WTC11 (cell line): ENCODE measurements at regions of chr15 and their contacts with region 1.

Region 1: DNA sequence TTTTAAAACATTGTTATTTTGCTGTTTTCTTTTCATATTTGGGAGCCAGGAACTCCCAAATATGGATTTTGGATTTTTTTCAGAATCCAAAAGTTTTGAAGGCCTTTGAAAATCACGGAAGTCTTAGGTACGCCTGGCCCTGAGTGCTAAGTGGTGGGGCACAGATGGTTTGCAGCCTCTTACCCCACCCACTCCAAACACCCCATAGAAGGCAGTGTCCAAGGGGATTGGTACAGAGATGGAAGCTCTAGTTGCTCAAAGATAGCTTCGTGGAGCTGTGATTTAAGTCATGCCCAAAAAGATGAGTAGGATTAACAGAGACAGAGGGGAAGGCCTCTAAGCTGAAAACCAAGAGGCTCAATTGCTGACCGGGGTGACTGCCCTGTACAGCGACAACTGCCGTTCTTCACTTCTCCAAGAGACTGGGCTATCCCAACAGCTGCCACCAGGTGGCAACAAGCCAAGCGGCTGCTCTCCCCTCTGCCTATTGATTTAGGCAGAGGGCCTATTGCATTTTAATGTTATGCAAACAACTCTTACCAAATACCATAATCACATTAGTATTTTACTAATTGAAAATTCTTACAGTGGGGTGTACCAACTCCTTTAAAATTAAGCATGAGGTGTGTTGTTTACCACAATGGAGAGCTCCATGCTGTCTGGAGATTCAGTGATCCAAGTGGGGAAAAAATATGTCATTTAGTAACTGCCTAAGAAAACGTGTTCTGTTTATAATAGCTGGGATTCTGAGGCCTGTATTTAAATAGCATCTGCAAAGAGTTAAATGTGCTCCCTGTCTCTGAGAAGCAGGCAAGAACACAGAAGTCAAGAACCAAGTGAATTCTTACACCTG is 64.0 kb upstream of the C15orf61 start:
- DNase-seq: peak; percentile 91
- ATAC-seq: peak; percentile 96
- H3K4me3 Mint-ChIP-seq: no peak overlapping the region
- H3K27ac Mint-ChIP-seq: no peak overlapping the region
- H3K4me1 Mint-ChIP-seq: peaks cover 10% of the 10 kb centered on the region
- H3K27me3 Mint-ChIP-seq: peaks cover 16% of the 10 kb centered on the region
- CTCF ChIP-seq: peak; percentile 89

Region 2: GRCh38 chr15:67165254-67166253 is 291.3 kb before region 1 on chr15:
- CTCF ChIA-PET with region 1: no interaction called
- POLR2A ChIA-PET with region 1: no interaction called
- DNase-seq: peak; percentile 45
- ATAC-seq: peak; percentile 85
- H3K4me3 Mint-ChIP-seq: peak overlapping the region; percentile 47
- H3K27ac Mint-ChIP-seq: peak overlapping the region; percentile 97
- H3K4me1 Mint-ChIP-seq: peaks cover 82% of the 10 kb centered on the region
- H3K27me3 Mint-ChIP-seq: no peaks in the 10 kb centered on the region
- CTCF ChIP-seq: no peak

Region 3: GRCh38 chr15:67307156-67307555 is 149.7 kb before region 1 on chr15:
- CTCF ChIA-PET with region 1: no interaction called
- POLR2A ChIA-PET with region 1: no interaction called
- DNase-seq: no peak
- ATAC-seq: no peak
- H3K4me3 Mint-ChIP-seq: no peak overlapping the region
- H3K27ac Mint-ChIP-seq: no peak overlapping the region
- H3K4me1 Mint-ChIP-seq: peaks cover 7% of the 10 kb centered on the region
- H3K27me3 Mint-ChIP-seq: no peaks in the 10 kb centered on the region
- CTCF ChIP-seq: no peak

Region 4: GRCh38 chr15:67839929-67840748 is 383.2 kb after region 1 on chr15 and contains the start of gene RNU6-1:
- CTCF ChIA-PET with region 1: interaction called, 18 read pairs
- POLR2A ChIA-PET with region 1: no interaction called
- DNase-seq: peak; percentile 83
- ATAC-seq: peak; percentile 29
- H3K4me3 Mint-ChIP-seq: peak within 1 kb of the TSS; percentile 90
- H3K27ac Mint-ChIP-seq: peak within 1 kb of the TSS; percentile 97
- H3K4me1 Mint-ChIP-seq: peaks cover 61% of the 10 kb centered on the region
- H3K27me3 Mint-ChIP-seq: peaks cover 58% of the 10 kb centered on the region
- CTCF ChIP-seq: no peak
- total RNA-seq, gene RNU6-1: not detected in 3 replicates